GM23248 (cell line): ENCODE measurements at regions of chr3 and their contacts with region 1.

Region 1: DNA sequence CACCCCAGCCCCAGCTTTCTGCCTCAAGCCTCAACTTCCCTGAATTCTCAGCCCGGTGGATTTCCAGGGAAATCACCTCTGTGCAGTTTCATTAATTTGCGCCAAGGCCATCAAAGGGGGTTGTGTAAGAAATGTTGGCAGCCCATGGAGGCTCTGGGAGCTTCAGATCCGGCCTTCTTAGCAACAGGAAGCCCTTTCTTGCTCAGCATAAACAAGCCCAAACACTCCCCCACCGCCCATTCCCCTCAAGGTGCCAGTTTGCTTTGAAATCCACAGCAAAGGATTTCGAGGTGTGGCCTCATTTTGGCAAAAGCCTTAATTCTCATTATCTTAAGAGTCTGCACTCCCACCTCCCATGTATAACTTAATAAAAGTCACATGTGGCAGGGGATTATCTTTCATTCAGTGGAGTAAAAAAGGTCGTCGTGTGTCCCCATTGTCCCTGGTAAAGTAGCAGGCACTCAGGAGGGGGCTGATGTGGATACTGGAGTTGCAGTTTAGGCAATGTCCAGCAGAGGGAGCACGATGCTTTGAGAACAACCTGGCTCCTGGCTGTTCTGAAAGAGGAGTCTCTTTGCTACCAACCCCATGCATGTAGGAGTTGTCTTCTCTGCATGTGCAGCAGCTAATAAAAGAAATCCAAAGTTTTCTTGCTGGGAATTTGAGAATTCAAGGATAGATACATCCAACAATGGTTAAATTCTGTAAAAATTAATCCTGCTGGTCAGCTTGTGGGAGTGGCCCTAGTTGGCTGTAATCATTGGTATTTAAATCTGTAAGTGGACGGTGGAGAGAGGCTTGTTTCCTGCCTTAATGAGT is 39.5 kb downstream of the EBLN2 start:
- DNase-seq: peak; percentile 88
- H3K4me3 ChIP-seq: no peak overlapping the region
- H3K27ac ChIP-seq: no peak overlapping the region
- H3K4me1 ChIP-seq: no peaks in the 10 kb centered on the region; the same call in 1 of the 2 replicates
- H3K27me3 ChIP-seq: no peaks in the 10 kb centered on the region

Region 2: DNA sequence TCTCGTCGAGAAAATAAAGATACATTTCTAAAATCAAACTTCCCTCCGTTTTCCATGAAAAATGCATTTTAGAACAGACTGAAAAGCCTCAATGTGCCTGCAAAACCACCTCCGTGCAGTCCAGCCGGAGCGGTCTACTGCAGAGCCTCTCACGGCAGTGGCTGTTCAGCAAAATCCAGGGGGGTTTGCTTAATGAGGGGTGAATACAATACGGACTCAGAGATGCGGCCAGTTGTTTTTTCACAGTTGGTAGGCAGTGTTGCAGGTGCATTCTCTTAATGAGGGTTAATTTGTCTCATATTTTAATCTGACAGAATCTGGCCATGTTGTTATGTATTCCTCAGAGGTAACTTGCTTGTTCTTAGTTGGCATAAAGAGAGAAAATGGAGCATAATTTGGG is 183.5 kb after region 1 on chr3:
- in situ Hi-C with region 1: no loop called
- DNase-seq: no peak
- H3K4me3 ChIP-seq: no peak overlapping the region
- H3K27ac ChIP-seq: no peak overlapping the region
- H3K4me1 ChIP-seq: no peaks in the 10 kb centered on the region
- H3K27me3 ChIP-seq: peaks cover 32% of the 10 kb centered on the region

Region 3: DNA sequence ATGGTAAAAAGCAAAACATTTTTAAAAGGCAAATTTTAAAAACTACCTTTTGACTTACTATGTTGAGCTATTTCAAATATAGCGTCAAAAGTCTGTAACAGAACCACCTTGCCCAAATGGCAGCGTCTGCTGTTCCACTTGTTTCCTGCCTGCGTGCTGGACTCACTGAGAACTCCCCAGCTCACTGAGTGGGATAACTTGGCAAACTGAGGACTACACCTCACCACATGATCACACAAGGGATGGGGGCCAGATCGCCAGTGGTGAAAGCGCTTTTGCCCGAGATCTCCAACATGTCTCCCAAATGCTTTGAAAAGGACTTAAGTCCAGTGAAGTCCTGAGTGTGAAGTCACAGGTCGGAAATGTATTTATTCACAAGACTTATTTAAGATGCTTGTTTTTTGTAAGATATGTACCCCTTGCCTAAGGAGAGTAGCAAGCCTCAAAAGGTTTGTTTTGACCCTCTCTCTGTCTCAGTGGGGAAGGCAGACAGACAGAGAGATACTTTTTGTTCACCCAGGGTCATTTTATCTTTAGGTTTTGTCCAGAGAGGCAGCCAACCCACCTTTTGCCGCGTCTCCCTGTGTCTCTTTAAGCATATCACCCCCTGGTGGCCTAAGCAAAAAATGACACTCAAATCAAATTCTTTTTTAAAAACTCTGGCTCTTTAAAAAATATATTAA is 331.2 kb after region 1 on chr3:
- in situ Hi-C with region 1: loop called (anchors 10 kb)
- DNase-seq: peak; percentile 73
- H3K4me3 ChIP-seq: no peak overlapping the region
- H3K27ac ChIP-seq: no peak overlapping the region
- H3K4me1 ChIP-seq: peaks cover 21% of the 10 kb centered on the region
- H3K27me3 ChIP-seq: no peaks in the 10 kb centered on the region

Region 4: DNA sequence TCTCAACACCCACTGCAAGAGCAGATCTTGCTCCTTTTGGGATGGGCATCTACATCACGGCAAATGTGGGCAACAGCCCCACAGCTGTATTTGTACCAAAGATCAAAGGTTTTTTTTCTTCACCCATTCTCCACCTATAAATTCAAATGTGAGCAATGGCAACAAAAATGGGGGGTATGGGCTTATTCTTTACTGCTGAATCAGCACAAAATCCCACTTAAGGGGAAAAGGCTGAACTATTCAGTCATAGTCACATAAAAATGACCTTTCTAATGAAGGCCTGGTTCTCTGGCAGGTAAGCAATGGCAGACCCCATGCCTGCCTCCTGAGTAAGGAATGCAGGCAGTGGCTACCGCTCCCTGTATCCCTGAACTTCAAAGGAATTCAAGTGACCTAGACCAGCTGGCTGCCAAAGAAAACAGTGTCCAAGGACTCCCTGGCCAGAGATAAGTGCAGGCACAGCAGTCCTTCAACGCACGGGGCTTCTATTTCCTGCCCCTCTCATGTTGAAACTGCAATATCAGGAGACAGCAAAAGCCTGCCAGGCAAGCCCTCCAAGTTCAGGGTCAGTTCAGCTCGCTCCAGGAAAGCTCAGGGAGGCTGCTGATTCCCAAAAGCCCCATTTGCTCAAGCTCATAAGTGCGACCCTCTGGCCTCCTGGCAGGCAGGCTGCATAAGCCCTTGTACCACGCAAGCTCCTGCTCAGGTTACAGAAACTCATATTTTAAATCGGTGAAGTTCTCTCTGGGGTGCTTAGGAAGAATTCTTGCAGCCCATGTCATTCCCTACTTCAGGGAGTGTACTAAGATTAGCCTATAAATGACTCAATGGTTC is 389.7 kb after region 1 on chr3:
- in situ Hi-C with region 1: loop called (anchors 10 kb)
- DNase-seq: no peak
- H3K4me3 ChIP-seq: no peak overlapping the region
- H3K27ac ChIP-seq: no peak overlapping the region
- H3K4me1 ChIP-seq: peaks cover 36% of the 10 kb centered on the region
- H3K27me3 ChIP-seq: no peaks in the 10 kb centered on the region

Region 5: DNA sequence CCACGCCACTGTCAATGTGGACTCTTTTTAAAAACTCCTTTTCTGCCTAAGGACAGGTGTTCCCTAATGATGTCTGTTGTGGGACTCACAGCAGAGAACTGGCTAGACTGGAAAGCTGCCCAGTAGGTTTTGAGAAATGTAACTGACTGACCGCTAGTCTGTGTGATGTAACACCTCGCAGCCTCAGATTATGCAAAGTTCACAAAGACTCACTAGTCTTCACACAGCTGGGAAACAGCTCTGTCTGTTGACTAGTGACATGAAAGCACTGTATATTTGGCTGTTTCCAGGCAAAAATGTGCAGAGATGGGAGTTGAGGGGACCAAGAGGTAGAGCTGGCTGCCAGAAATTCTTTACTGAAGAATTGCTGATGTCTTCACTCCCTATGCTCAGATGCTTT is 513.5 kb after region 1 on chr3:
- in situ Hi-C with region 1: loop called (anchors 10 kb)
- DNase-seq: peak; percentile 94
- H3K4me3 ChIP-seq: no peak overlapping the region
- H3K27ac ChIP-seq: peak overlapping the region; percentile 80
- H3K4me1 ChIP-seq: peaks cover 52% of the 10 kb centered on the region
- H3K27me3 ChIP-seq: no peaks in the 10 kb centered on the region

Region 6: GRCh38 chr3:73848173-73848906 is 747.4 kb after region 1 on chr3:
- in situ Hi-C with region 1: loop called (anchors 25 kb)
- DNase-seq: peak; percentile 72
- H3K4me3 ChIP-seq: no peak overlapping the region
- H3K27ac ChIP-seq: no peak overlapping the region
- H3K4me1 ChIP-seq: no peaks in the 10 kb centered on the region
- H3K27me3 ChIP-seq: no peaks in the 10 kb centered on the region